CD8-positive, alpha-beta T cell (primary cell): ENCODE measurements at regions of chr17 and their contacts with region 1.

Region 1: GRCh38 chr17:39429600-39429999 is 21.5 kb downstream of the MED1 start:
- DNase-seq: no peak
- ATAC-seq: no peak
- H3K4me3 ChIP-seq: no peak overlapping the region
- H3K4me3 Mint-ChIP-seq: no peak overlapping the region
- H3K27ac ChIP-seq: no peak overlapping the region
- H3K27ac Mint-ChIP-seq: no peak overlapping the region
- H3K4me1 ChIP-seq: no peaks in the 10 kb centered on the region
- H3K4me1 Mint-ChIP-seq: no peaks in the 10 kb centered on the region
- H3K27me3 ChIP-seq: no peaks in the 10 kb centered on the region
- H3K27me3 Mint-ChIP-seq: no peaks in the 10 kb centered on the region
- CTCF ChIP-seq: no peak

Region 2: DNA sequence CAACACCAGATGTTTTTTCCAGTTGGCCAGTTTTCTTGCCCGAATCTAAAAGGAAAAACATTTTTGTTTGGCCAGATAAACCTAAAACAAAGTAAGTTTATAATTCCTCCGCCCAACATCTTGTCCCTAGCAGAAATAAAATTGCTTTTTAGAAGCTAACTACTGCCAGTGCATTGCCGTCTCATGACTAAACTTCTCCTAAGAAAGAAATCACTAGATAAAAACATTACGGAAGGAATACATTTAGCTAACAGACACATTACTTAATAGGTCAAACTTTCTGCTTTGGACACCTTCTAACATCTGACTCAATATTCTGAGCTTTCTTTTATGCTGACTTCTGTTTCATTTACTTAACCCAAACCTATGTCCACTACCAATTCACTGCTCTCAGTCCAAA is 64.4 kb before region 1 on chr17:
- CTCF ChIA-PET with region 1: no interaction called
- POLR2A ChIA-PET with region 1: no interaction called
- intact Hi-C with region 1: loop called in 1 of 2 experiments (anchors 10 kb)
- DNase-seq: no peak
- ATAC-seq: no peak
- H3K4me3 ChIP-seq: no peak overlapping the region
- H3K4me3 Mint-ChIP-seq: no peak overlapping the region
- H3K27ac ChIP-seq: no peak overlapping the region
- H3K27ac Mint-ChIP-seq: no peak overlapping the region
- H3K4me1 ChIP-seq: no peaks in the 10 kb centered on the region
- H3K4me1 Mint-ChIP-seq: peaks cover 32% of the 10 kb centered on the region
- H3K27me3 ChIP-seq: no peaks in the 10 kb centered on the region
- H3K27me3 Mint-ChIP-seq: no peaks in the 10 kb centered on the region
- CTCF ChIP-seq: no peak